Activated CD4-positive, alpha-beta memory T cell treated with anti-CD3 and anti-CD28 coated beads for 36 hours (primary cell): ENCODE measurements at regions of chr9 and their contacts with region 1.

Region 1: DNA sequence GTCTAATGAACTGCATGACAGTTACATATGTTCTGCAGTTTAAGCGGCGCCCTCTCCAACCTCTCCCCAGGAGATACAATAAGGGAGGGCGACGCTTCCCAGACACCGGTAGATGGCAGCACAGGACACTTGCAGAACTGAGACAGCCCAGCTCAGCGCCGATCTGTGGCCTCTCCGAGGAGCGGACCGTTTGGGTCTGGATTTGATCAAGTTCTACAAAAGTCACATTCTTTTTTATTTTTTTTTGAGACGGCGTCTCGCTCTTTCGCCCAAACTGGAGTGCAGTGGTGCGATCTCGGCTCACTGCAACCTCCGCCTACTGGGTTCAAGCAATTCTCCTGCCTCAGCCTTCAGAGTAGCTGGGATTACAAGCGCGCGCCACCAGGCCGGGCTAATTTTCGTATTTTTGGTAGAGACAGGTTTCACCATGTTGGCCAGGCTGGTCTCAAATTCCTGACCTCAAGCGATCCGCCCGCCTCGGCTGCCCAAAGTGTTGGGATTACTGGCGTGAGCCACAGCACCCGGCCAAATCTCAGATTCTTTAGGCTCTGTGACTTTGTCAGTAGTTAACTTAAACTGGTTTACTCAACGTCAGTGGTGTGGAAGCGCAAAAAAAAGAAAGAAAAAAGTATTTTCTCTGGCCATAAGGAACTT is 1.4 kb upstream of the ATOSB start:
- DNase-seq: peak; percentile 91
- H3K4me3 Mint-ChIP-seq: peak overlapping the region; percentile 81
- H3K27ac Mint-ChIP-seq: peak overlapping the region; percentile 91
- H3K4me1 Mint-ChIP-seq: peaks cover 33% of the 10 kb centered on the region
- H3K27me3 Mint-ChIP-seq: no peaks in the 10 kb centered on the region

Region 2: GRCh38 chr9:34458013-34458958 is 658.7 kb before region 1 on chr9 and contains the starts of genes DNAI1 and FAM219A:
- CTCF ChIA-PET with region 1: no interaction called
- POLR2A ChIA-PET with region 1: no interaction called
- intact Hi-C with region 1: loop called (anchors 1 kb)
- DNase-seq: peak; percentile 99
- H3K4me3 Mint-ChIP-seq: peak within 1 kb of the TSS; percentile 86
- H3K27ac Mint-ChIP-seq: no peak within 1 kb of the TSS
- H3K4me1 Mint-ChIP-seq: peaks cover 40% of the 10 kb centered on the region
- H3K27me3 Mint-ChIP-seq: peaks cover 5% of the 10 kb centered on the region
- total RNA-seq, gene DNAI1: 0.19 to 0.69 TPM
- total RNA-seq, gene FAM219A: 13.3 to 13.8 TPM

Region 3: DNA sequence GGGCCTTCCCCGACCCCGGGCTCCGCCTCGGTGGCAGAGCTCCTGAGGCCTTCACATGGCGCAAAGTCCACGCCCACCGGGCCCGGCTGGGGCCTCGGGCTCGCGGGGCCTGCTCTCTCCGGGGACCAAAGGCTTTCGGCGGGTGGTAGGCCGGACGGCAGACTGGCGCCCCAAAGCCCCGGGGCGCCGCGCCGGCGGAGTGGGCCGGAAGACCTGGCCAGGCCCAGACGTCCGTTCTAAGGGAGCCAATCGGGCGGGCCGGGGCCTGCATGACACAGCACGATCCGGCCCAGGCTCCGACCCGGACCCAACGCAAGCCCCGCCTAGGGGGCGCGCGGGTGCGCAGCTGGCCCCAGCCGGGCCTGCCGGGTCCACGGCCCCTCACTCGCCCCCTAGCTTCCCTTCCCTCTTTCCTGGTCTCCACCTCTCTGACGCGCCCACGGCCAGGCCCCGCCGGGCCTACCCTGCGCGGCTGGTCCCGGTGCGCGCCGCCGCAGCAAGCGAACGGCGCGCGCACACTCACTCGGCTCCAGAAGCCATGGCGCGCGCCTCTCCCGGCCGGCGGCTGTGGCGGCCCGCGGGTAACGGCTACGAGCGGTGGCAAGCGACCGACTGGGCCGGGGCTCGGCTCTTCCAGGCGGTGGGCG is 45.1 kb before region 1 on chr9:
- CTCF ChIA-PET with region 1: interaction called, 3 read pairs
- POLR2A ChIA-PET with region 1: interaction called, 37 read pairs
- intact Hi-C with region 1: loop called (anchors 1 kb)
- DNase-seq: peak; percentile 81
- H3K4me3 Mint-ChIP-seq: peak overlapping the region; percentile 92
- H3K27ac Mint-ChIP-seq: peak overlapping the region; percentile 99
- H3K4me1 Mint-ChIP-seq: peaks cover 54% of the 10 kb centered on the region
- H3K27me3 Mint-ChIP-seq: peaks cover 2% of the 10 kb centered on the region

Region 4: DNA sequence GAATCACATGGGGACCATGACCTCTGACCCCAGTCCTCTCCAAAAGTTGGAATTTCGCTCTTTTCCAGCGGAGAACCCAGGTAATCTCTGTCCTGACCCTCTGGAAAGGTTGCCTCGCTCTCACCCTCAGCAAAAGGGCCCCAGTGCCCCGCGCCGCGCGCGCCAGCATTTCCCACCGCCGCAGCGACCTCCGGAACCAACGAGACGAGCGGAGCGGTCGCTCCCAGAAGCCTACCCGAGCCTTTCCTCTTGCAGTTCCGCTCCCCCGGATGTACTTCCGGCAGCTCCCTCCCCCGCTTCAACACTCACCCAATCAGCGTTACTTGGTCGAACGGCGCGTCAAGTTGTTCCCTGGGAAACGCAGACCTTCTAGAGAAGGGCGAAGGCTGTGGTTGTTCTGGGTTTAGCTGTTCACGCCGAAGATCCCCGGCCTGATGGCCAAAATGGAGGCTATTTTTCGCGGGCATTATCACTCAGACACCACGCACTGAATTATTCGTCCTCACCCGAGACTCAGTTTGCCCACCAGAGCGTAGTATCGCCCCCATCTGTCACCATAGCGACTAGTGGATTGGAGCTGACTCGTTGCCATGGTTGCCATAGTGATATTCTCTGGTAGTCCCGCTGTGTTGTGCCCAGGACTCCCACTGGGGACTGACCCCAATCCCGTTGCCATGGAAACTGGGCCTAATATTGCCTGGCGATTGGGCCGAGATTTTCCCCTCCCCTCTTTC is 13.9 kb before region 1 on chr9 and contains the start of gene STOML2:
- CTCF ChIA-PET with region 1: interaction called, 15 read pairs
- POLR2A ChIA-PET with region 1: interaction called, 15 read pairs
- intact Hi-C with region 1: loop called (anchors 1 kb)
- DNase-seq: peak; percentile 97
- H3K4me3 Mint-ChIP-seq: peak within 1 kb of the TSS; percentile 99
- H3K27ac Mint-ChIP-seq: peak within 1 kb of the TSS; percentile 93
- H3K4me1 Mint-ChIP-seq: peaks cover 30% of the 10 kb centered on the region
- H3K27me3 Mint-ChIP-seq: no peaks in the 10 kb centered on the region
- total RNA-seq, gene STOML2: 162 TPM

Region 5: DNA sequence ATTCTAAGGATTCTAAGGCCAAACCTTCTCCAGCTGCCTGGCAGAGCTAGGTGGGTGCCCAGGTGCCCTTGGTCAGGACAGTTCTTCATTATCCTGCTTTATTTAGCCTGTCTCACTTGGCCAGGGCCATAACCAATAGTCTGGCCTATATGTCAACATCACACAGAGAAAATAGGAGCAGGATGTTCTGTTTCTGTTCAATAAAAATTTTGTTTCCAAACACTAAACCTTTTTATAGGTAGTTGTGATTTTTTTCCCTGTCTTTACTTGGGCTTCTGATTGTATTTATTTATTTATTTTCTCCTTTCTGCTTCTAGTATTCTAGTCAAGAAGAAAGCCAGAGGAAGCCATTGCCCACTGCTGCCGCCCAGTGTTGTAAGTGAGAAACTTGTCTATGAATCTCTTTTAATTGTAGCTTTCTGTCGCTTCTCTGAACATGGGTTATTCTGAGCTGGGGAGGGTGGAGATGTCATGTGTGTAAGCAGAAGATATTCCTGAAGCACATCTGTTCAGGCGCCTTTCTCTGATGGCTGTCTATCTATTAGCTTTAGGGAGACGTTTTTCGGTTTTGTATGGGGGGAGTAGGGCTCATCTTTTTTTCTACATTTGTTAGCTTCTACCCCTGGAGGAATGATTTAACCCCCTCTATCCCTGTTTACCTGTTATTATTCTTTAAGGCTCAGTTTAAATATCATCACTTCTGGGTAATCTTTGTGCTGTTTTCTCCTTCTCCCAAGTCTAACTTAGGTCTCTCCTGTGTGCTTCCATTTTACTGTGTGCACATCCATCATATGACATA is 141.8 kb after region 1 on chr9:
- CTCF ChIA-PET with region 1: interaction called, 41 read pairs
- POLR2A ChIA-PET with region 1: no interaction called
- intact Hi-C with region 1: loop called (anchors 1 kb)
- DNase-seq: peak; percentile 56
- H3K4me3 Mint-ChIP-seq: no peak overlapping the region
- H3K27ac Mint-ChIP-seq: no peak overlapping the region
- H3K4me1 Mint-ChIP-seq: no peaks in the 10 kb centered on the region
- H3K27me3 Mint-ChIP-seq: no peaks in the 10 kb centered on the region

Region 6: GRCh38 chr9:35470894-35471293 is 353.9 kb after region 1 on chr9:
- CTCF ChIA-PET with region 1: interaction called, 60 read pairs
- POLR2A ChIA-PET with region 1: no interaction called
- intact Hi-C with region 1: no loop called
- DNase-seq: no peak
- H3K4me3 Mint-ChIP-seq: no peak overlapping the region
- H3K27ac Mint-ChIP-seq: no peak overlapping the region
- H3K4me1 Mint-ChIP-seq: no peaks in the 10 kb centered on the region
- H3K27me3 Mint-ChIP-seq: peaks cover 21% of the 10 kb centered on the region

Region 7: GRCh38 chr9:35553670-35554543 is 436.9 kb after region 1 on chr9:
- CTCF ChIA-PET with region 1: interaction called, 15 read pairs
- POLR2A ChIA-PET with region 1: no interaction called
- intact Hi-C with region 1: loop called (anchors 1 kb)
- DNase-seq: peak; percentile 61
- H3K4me3 Mint-ChIP-seq: no peak overlapping the region
- H3K27ac Mint-ChIP-seq: no peak overlapping the region
- H3K4me1 Mint-ChIP-seq: no peaks in the 10 kb centered on the region
- H3K27me3 Mint-ChIP-seq: no peaks in the 10 kb centered on the region

Region 8: DNA sequence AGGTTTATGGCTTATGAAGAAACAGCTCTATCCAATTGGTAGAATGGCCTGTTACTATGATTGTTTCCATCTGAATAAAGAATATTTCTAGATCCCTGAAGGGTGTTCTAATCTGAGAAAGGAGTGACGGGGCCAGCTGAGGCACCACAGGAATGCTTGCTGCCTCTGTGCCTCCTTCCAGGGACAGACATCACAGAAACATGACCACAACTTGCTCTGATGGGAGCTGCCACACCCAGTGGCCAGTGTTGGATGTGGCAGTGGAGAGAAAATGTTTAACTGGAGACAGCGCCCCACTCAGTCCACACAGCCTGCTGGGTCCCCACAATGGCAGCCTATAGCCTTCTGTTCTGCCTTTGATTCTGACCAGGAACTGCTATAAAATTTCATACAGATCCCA is 449.4 kb after region 1 on chr9:
- CTCF ChIA-PET with region 1: no interaction called
- POLR2A ChIA-PET with region 1: no interaction called
- intact Hi-C with region 1: no loop called
- DNase-seq: no peak
- H3K4me3 Mint-ChIP-seq: no peak overlapping the region
- H3K27ac Mint-ChIP-seq: no peak overlapping the region
- H3K4me1 Mint-ChIP-seq: peaks cover 30% of the 10 kb centered on the region
- H3K27me3 Mint-ChIP-seq: no peaks in the 10 kb centered on the region

Region 9: GRCh38 chr9:36036780-36037548 is 919.9 kb after region 1 on chr9 and contains the start of gene RECK:
- CTCF ChIA-PET with region 1: no interaction called
- POLR2A ChIA-PET with region 1: no interaction called
- intact Hi-C with region 1: no loop called
- DNase-seq: peak; percentile 93
- H3K4me3 Mint-ChIP-seq: peak within 1 kb of the TSS; percentile 81
- H3K27ac Mint-ChIP-seq: peak within 1 kb of the TSS; percentile 2
- H3K4me1 Mint-ChIP-seq: peaks cover 37% of the 10 kb centered on the region
- H3K27me3 Mint-ChIP-seq: peaks cover under 1% of the 10 kb centered on the region
- total RNA-seq, gene RECK: 6.1 to 7.2 TPM